Aorta (tissue), 5 donors: ENCODE measurements at regions of chr12 and their contacts with region 1.

Region 1: GRCh38 chr12:20369305-20370005 is 1.1 kb downstream of the PDE3A start:
- DNase-seq: peak; percentile 89 to 93
- ATAC-seq: peak; percentile 92
- H3K4me3 ChIP-seq: peak overlapping the region; percentile 84 to 95
- H3K27ac ChIP-seq: peak overlapping the region; percentile 35 to 52
- H3K4me1 ChIP-seq: peaks cover 0 to 2% of the 10 kb centered on the region in 2 donors
- H3K27me3 ChIP-seq: no peaks in the 10 kb centered on the region

Region 2: GRCh38 chr12:19757317-19757877 is 612.1 kb before region 1 on chr12:
- intact Hi-C with region 1: loop called in 1 of 2 experiments (anchors 10 kb)
- DNase-seq: no peak
- ATAC-seq: peak; percentile 59
- H3K4me3 ChIP-seq: no peak overlapping the region
- H3K27ac ChIP-seq: no peak overlapping the region
- H3K4me1 ChIP-seq: peaks cover 0 to 2% of the 10 kb centered on the region in 2 donors
- H3K27me3 ChIP-seq: no peaks in the 10 kb centered on the region

Region 3: DNA sequence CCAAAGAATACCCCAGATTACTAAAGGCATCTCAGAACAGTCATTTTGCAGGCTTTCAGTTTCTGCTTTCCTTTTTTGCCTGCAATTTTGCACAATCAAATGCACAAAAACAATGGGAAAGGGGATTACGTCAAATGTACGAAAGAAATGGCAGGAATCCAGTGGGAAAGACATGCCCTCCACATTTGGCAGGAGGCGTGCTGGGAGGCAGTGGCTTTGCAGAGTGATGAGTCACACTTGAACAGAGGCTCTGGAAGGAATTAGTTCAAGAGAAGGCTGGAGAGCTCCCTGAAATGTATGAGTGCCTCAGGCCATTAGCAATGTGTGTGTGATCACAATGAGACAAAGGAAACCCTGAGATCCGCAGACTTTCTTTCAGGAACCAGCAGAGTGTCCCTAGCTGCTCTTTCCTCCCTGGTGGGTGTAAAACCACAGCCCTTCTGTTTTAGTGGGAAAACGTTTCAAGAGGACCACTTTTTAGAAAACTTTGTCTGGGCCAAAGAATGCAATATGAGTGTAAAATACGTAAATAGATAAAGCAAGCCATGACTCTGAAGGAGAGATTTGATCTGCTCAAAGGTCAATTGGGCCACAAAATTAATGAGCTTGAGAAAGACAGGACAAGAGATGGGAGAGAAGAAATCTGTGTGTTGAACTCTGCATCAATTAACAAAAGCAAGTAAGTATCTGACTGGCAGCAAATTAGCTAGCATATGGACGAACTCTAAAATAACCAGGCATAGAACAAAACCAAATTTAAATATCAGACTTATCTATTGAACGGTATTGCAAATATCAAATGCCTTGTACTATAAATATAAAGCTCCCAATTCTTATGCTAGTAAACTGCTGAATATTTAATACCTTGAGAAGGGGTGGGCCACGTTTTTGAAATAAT is 156.5 kb before region 1 on chr12:
- intact Hi-C with region 1: loop called in 1 of 2 experiments (anchors 5 kb)
- DNase-seq: peak; percentile 89
- ATAC-seq: peak; percentile 96
- H3K4me3 ChIP-seq: peak overlapping the region in 1 of 2 donors; percentile 54
- H3K27ac ChIP-seq: no peak overlapping the region
- H3K4me1 ChIP-seq: peaks cover 0 to 11% of the 10 kb centered on the region in 2 donors
- H3K27me3 ChIP-seq: no peaks in the 10 kb centered on the region

Region 4: GRCh38 chr12:20278276-20278675 is 91.2 kb before region 1 on chr12:
- intact Hi-C with region 1: loop called in 1 of 2 experiments (anchors 5 kb)
- DNase-seq: no peak
- ATAC-seq: no peak
- H3K4me3 ChIP-seq: no peak overlapping the region
- H3K27ac ChIP-seq: no peak overlapping the region
- H3K4me1 ChIP-seq: peaks cover 0 to 1% of the 10 kb centered on the region in 2 donors
- H3K27me3 ChIP-seq: no peaks in the 10 kb centered on the region

Region 5: GRCh38 chr12:20601668-20602280 is 232.3 kb after region 1 on chr12:
- intact Hi-C with region 1: loop called in 1 of 2 experiments (anchors 5 kb)
- DNase-seq: no peak
- ATAC-seq: no peak
- H3K4me3 ChIP-seq: no peak overlapping the region
- H3K27ac ChIP-seq: no peak overlapping the region
- H3K4me1 ChIP-seq: peaks cover 0 to 7% of the 10 kb centered on the region in 2 donors
- H3K27me3 ChIP-seq: no peaks in the 10 kb centered on the region